HCT116 (cell line): ENCODE measurements at regions of chr19 and their contacts with region 1.

Region 1: GRCh38 chr19:55777528-55777927 is 8.6 kb downstream of the RFPL4AL1 start:
- DNase-seq: peak; percentile 2
- ATAC-seq: peak; percentile 52; the same call in 1 of the 2 replicates
- H3K4me3 ChIP-seq: no peak overlapping the region
- H3K27ac ChIP-seq: no peak overlapping the region
- H3K4me1 ChIP-seq: no peaks in the 10 kb centered on the region
- H3K27me3 ChIP-seq: peaks cover 13% of the 10 kb centered on the region; the same call in 1 of the 2 replicates
- CTCF ChIP-seq: peak; percentile 34 to 71 (median 63); a peak in 5 of 6 replicates
- POLR2A ChIP-seq: no peak
- RAD21 ChIP-seq: peak; percentile 55

Region 2: DNA sequence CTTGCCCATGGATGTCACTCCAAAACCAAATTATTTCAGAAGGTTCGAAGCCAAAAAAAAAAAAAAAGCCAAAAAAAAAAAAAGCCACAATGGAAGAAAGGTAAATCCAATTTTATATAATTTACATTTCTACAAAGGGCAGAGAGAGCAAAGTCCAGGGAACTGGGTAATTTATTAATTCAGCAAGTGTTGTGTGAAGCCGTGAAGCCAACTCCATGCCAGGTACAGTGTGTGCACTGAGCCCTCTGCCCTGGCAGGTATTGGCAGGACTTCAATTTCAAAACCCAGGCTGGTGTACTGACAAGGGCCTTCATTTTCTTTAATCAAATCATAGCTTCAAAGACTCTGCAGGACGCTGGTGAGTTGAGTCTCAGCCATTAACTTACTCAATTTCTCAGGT is 24.1 kb before region 1 on chr19:
- CTCF ChIA-PET with region 1: no interaction called
- POLR2A ChIA-PET with region 1: no interaction called
- RAD21 ChIA-PET with region 1: no interaction called
- intact Hi-C with region 1: no loop called
- DNase-seq: no peak
- ATAC-seq: no peak
- H3K4me3 ChIP-seq: no peak overlapping the region
- H3K27ac ChIP-seq: no peak overlapping the region
- H3K4me1 ChIP-seq: no peaks in the 10 kb centered on the region
- H3K27me3 ChIP-seq: peaks cover 27% of the 10 kb centered on the region; the same call in 1 of the 2 replicates
- CTCF ChIP-seq: no peak
- POLR2A ChIP-seq: no peak
- RAD21 ChIP-seq: no peak

Region 3: DNA sequence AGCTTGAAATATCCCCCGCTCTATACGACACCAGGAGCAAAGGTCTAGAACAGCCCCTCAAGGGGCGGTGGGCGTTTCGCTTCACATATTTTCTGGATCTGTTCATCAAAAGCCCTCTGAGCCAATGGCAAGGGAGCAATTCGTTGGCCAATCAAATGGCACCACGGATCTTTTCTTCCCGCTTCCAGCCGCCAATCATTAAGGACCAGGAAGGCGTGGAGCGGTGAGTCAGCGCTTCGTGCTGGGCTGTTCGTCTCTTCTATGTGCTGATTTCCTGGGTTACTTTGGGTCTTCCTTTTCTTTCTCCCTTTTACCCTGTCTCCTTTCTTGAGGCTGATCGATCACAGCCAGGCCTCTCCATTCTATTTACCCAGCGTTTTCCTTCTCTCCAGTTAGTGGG is 58.8 kb after region 1 on chr19 and contains the start of gene NLRP4:
- CTCF ChIA-PET with region 1: no interaction called
- POLR2A ChIA-PET with region 1: no interaction called
- RAD21 ChIA-PET with region 1: no interaction called
- intact Hi-C with region 1: no loop called
- DNase-seq: no peak
- ATAC-seq: peak; percentile 63; the same call in 1 of the 2 replicates
- H3K4me3 ChIP-seq: no peak within 1 kb of the TSS
- H3K27ac ChIP-seq: no peak within 1 kb of the TSS
- H3K4me1 ChIP-seq: no peaks in the 10 kb centered on the region
- H3K27me3 ChIP-seq: no peaks in the 10 kb centered on the region
- CTCF ChIP-seq: no peak
- POLR2A ChIP-seq: no peak
- RAD21 ChIP-seq: no peak
- total RNA-seq, gene NLRP4: 0.52 TPM

Region 4: GRCh38 chr19:55947532-55947931 is 170.0 kb after region 1 on chr19 and contains the start of gene NLRP8:
- CTCF ChIA-PET with region 1: no interaction called
- POLR2A ChIA-PET with region 1: no interaction called
- RAD21 ChIA-PET with region 1: no interaction called
- intact Hi-C with region 1: loop called (anchors 5 kb)
- DNase-seq: no peak
- ATAC-seq: no peak
- H3K4me3 ChIP-seq: no peak within 1 kb of the TSS
- H3K27ac ChIP-seq: no peak within 1 kb of the TSS
- H3K4me1 ChIP-seq: no peaks in the 10 kb centered on the region
- H3K27me3 ChIP-seq: no peaks in the 10 kb centered on the region
- CTCF ChIP-seq: no peak
- POLR2A ChIP-seq: no peak
- RAD21 ChIP-seq: no peak
- total RNA-seq, gene NLRP8: not detected